ENCODE measurements at regions of chr11 and their contacts with region 1.

Region 1: GRCh38 chr11:62315431-62315830 is 16.6 kb upstream of the SCGB1D4 start:
- DNase-seq: no peak
- H3K4me3 ChIP-seq: no peak overlapping the region
- H3K4me3 Mint-ChIP-seq: no peak overlapping the region
- H3K27ac Mint-ChIP-seq: no peak overlapping the region
- H3K4me1 ChIP-seq: 0 out of 2 replicates have a peak, but pooled peaks cover 2% of the 10 kb centered on the region
- H3K4me1 Mint-ChIP-seq: peaks cover 7% of the 10 kb centered on the region
- H3K27me3 ChIP-seq: no peaks in the 10 kb centered on the region
- H3K27me3 Mint-ChIP-seq: no peaks in the 10 kb centered on the region
- CTCF ChIP-seq: no peak

Region 2: GRCh38 chr11:62169091-62169847 is 146.2 kb before region 1 on chr11:
- CTCF ChIA-PET with region 1: no interaction called
- POLR2A ChIA-PET with region 1: no interaction called
- intact Hi-C with region 1: loop called (anchors 1 kb)
- DNase-seq: no peak
- H3K4me3 ChIP-seq: no peak overlapping the region
- H3K4me3 Mint-ChIP-seq: no peak overlapping the region
- H3K27ac Mint-ChIP-seq: no peak overlapping the region
- H3K4me1 ChIP-seq: no peaks in the 10 kb centered on the region
- H3K4me1 Mint-ChIP-seq: no peaks in the 10 kb centered on the region
- H3K27me3 ChIP-seq: 0 out of 2 replicates have a peak, but pooled peaks cover 1% of the 10 kb centered on the region
- H3K27me3 Mint-ChIP-seq: peaks cover 12% of the 10 kb centered on the region
- CTCF ChIP-seq: no peak

Region 3: DNA sequence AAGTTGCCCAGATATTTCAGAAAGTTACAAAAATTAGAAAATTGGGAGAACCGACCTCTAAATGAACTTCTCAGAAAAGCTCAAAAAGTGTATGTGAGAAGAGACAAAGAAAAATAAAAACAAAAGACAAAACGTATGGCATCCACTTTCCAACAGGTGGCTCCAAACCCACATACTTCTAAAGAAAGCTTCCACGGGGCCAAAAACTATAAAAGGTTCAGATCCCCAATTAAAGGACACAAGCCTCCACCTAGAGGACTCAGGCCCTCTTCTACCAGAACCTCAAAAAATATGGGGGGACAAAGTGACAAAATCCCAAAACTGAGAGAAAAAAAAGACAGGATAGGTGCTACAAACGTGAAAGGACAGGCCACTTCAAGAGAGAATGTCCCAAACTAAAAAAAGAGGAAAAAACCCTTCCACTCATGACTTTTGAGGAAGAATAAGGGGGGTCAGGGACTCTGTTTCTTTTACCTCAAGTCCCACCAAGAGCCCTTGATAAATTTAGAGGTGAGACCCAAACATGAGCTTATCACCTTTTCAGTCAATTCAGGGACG is 98.2 kb before region 1 on chr11:
- CTCF ChIA-PET with region 1: interaction called, 3 read pairs
- POLR2A ChIA-PET with region 1: no interaction called
- intact Hi-C with region 1: loop called (anchors 1 kb)
- DNase-seq: peak in 1 of 2 experiments; percentile 22
- H3K4me3 ChIP-seq: no peak overlapping the region
- H3K4me3 Mint-ChIP-seq: no peak overlapping the region
- H3K27ac Mint-ChIP-seq: no peak overlapping the region
- H3K4me1 ChIP-seq: no peaks in the 10 kb centered on the region
- H3K4me1 Mint-ChIP-seq: no peaks in the 10 kb centered on the region
- H3K27me3 ChIP-seq: no peaks in the 10 kb centered on the region
- H3K27me3 Mint-ChIP-seq: peaks cover 10% of the 10 kb centered on the region
- CTCF ChIP-seq: peak; percentile 63 to 65

Region 4: GRCh38 chr11:62245271-62245753 is 70.1 kb before region 1 on chr11:
- CTCF ChIA-PET with region 1: interaction called, 3 read pairs
- POLR2A ChIA-PET with region 1: no interaction called
- intact Hi-C with region 1: loop called (anchors 1 kb)
- DNase-seq: peak; percentile 73 to 77
- H3K4me3 ChIP-seq: no peak overlapping the region
- H3K4me3 Mint-ChIP-seq: no peak overlapping the region
- H3K27ac Mint-ChIP-seq: no peak overlapping the region
- H3K4me1 ChIP-seq: no peaks in the 10 kb centered on the region
- H3K4me1 Mint-ChIP-seq: no peaks in the 10 kb centered on the region
- H3K27me3 ChIP-seq: no peaks in the 10 kb centered on the region
- H3K27me3 Mint-ChIP-seq: peaks cover 9% of the 10 kb centered on the region
- CTCF ChIP-seq: peak; percentile 37 to 45

Region 5: DNA sequence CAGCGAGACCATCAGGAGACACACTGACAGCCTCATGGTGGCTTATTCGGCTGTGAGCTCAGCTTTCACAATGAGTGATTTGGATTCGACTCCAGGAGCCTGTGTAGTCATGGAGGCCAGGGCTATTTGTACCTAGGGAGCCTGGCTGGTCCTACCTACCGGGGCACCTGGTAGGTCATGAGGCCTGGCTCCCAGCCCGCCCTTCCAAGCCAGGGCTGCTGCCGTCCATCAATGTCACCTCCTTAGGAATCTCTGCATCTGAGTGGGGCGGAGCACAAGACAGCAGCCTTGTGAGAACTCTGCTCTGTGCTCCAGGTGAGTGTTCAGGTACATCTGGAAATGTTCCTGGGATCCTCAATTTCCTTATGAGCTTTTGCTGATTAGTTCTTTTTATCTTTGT is 16.5 kb before region 1 on chr11 and contains the start of gene SCGB1D4:
- CTCF ChIA-PET with region 1: no interaction called
- POLR2A ChIA-PET with region 1: no interaction called
- intact Hi-C with region 1: no loop called
- DNase-seq: no peak
- H3K4me3 ChIP-seq: no peak within 1 kb of the TSS
- H3K4me3 Mint-ChIP-seq: no peak within 1 kb of the TSS
- H3K27ac Mint-ChIP-seq: no peak within 1 kb of the TSS
- H3K4me1 ChIP-seq: no peaks in the 10 kb centered on the region
- H3K4me1 Mint-ChIP-seq: no peaks in the 10 kb centered on the region
- H3K27me3 ChIP-seq: peaks cover 4% of the 10 kb centered on the region; the same call in 1 of the 2 replicates
- H3K27me3 Mint-ChIP-seq: peaks cover 14% of the 10 kb centered on the region
- CTCF ChIP-seq: no peak
- total RNA-seq, gene SCGB1D4: not detected in 2 replicates

Region 6: DNA sequence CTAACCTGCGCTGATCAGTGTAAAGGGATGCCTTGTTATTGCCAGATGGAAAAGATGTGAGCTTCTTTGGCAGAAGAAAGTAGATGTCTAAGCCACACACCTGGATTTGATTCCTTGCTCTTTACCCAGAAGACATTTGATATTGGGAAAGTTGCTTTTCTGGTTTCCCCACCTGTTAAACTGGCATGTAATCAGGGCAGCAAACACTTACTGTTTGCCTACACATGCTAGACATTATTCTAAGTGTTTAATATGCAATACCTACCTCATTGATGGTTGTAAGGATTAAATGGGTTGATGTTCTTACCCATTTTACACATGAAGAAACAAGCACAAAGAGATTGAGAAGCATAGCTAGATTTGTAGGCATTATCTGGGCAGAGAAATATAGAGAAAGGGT is 38.4 kb after region 1 on chr11:
- CTCF ChIA-PET with region 1: no interaction called
- POLR2A ChIA-PET with region 1: no interaction called
- intact Hi-C with region 1: no loop called
- DNase-seq: peak in 1 of 2 experiments; percentile 45
- H3K4me3 ChIP-seq: no peak overlapping the region
- H3K4me3 Mint-ChIP-seq: no peak overlapping the region
- H3K27ac Mint-ChIP-seq: no peak overlapping the region
- H3K4me1 ChIP-seq: peaks cover 8% of the 10 kb centered on the region; the same call in 1 of the 2 replicates
- H3K4me1 Mint-ChIP-seq: peaks cover 7% of the 10 kb centered on the region
- H3K27me3 ChIP-seq: no peaks in the 10 kb centered on the region
- H3K27me3 Mint-ChIP-seq: no peaks in the 10 kb centered on the region
- CTCF ChIP-seq: no peak

Measured in Caco-2 (cell line).